ENCODE measurements at regions of chr4 and their contacts with region 1.

Region 1: DNA sequence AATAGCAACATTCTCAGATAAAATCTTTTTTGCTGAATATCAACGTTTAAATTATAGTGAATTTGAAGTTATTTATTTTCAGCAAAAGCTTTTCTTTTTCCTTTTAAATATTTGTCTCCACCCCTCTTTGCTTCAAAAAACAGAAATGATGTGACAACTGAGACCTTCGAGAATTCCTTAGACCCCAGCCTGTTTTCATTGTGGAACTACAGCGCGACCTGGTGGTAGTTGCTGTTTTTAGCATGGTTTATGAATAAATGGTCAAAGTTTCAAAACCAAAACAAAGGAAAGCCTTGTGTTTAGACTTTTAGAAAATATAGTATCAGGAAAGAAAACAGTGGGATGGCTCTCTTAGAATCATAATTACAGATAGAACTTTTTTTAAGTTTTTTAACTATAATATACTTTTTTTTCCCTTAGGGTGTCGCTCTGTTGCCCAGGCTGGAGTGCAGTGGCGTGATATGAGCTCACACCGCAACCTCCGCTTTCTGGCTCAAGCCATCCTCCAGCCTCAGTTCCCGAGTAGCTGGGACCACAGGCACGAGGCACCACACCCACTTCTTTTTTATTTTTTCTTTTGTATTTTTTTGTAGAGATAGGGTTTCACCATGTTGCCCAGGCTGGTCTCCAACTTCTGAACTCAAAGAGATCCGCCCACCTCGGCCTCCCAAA is 26.8 kb upstream of the TMEM184C start:
- DNase-seq: peak in 1 of 2 donors; percentile 60
- ATAC-seq: peak in 1 of 3 donors; percentile 45
- H3K4me3 ChIP-seq: no peak overlapping the region
- H3K4me3 Mint-ChIP-seq: no peak overlapping the region
- H3K27ac ChIP-seq: no peak overlapping the region
- H3K27ac Mint-ChIP-seq: no peak overlapping the region
- H3K4me1 ChIP-seq: no peaks in the 10 kb centered on the region
- H3K4me1 Mint-ChIP-seq: no peaks in the 10 kb centered on the region
- H3K27me3 ChIP-seq: peaks cover 3% of the 10 kb centered on the region
- H3K27me3 Mint-ChIP-seq: peaks cover 11 to 13% of the 10 kb centered on the region in 2 donors
- CTCF ChIP-seq: peak; percentile 62

Region 2: DNA sequence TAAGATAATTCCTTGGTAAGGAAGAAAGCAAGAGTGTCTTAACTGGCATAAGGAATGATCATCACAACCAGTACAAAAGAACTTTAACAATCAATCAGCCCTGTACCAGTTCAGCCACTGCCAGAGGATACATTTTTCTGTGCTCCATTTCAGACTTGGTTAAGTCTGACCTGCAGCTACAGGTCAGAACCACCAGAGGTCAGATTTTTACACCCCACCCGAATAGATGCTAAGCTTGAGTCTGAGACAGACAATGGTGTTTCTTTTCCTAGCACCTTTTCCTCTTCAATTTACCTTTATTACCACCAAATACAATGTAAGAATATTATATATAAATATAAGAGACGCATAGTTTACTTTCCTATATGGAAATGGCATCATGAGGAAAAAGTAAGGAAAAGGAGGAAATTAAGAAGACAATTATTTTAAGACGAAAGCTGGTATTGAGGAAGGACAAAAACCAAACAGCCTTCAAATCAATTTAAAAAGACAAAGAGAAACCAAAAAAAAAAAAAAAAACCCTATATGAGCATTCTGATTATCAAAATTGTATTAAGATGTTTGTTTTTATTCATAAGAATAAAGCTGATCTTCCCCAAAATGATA is 429.4 kb before region 1 on chr4:
- intact Hi-C with region 1: loop called (anchors 5 kb)
- DNase-seq: peak in 1 of 2 donors; percentile 30
- ATAC-seq: peak in 1 of 3 donors; percentile 45
- H3K4me3 ChIP-seq: no peak overlapping the region
- H3K4me3 Mint-ChIP-seq: no peak overlapping the region
- H3K27ac ChIP-seq: no peak overlapping the region
- H3K27ac Mint-ChIP-seq: no peak overlapping the region
- H3K4me1 ChIP-seq: no peaks in the 10 kb centered on the region
- H3K4me1 Mint-ChIP-seq: no peaks in the 10 kb centered on the region
- H3K27me3 ChIP-seq: no peaks in the 10 kb centered on the region
- H3K27me3 Mint-ChIP-seq: peaks cover 8% of the 10 kb centered on the region in 2 donors
- CTCF ChIP-seq: peak; percentile 36

Region 3: DNA sequence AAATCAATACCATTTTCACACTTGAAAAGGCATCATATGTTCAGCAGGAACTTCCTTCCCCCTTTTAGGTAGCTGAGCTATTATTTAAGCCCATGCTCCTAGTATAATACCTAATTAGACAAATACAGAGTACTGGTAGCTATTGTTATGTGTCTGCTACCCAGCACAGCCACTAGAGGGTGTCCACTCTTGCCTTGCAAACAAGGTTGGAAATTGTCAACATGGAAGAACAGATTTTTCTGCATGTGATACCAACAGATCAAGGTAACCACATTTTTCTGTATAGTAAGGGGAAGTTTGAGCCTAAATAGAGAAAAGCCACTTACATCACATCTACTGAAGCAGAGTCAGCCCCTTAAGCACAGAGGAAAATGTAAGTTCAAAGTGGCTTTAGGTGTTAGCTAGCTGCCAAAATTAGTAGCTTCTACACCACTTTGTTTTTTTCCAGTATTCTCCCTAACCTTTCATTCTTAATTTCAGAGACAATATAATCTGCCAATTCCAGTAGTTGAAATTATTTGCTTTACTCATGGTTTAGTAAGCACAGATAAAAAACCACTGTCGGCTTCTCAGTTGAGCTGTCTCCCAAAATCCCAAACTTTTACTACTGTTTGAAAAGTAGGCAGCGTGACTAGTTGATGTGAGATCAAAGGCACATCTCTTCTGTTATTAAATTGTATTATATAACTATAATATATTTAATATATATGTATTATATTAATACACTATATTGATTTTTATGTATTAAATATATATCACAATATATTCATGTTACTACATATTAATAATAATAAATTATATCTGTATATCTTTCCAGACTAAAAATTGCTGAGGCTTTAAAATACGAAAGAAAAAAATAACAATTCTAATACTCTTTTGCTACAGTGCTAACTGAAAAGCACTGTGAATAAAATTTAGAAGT is 71.3 kb before region 1 on chr4:
- intact Hi-C with region 1: loop called (anchors 1 kb)
- DNase-seq: peak in 1 of 2 donors; percentile 66
- ATAC-seq: peak in 2 of 3 donors; percentile 60 to 71
- H3K4me3 ChIP-seq: no peak overlapping the region
- H3K4me3 Mint-ChIP-seq: no peak overlapping the region
- H3K27ac ChIP-seq: no peak overlapping the region
- H3K27ac Mint-ChIP-seq: no peak overlapping the region
- H3K4me1 ChIP-seq: no peaks in the 10 kb centered on the region
- H3K4me1 Mint-ChIP-seq: no peaks in the 10 kb centered on the region
- H3K27me3 ChIP-seq: no peaks in the 10 kb centered on the region
- H3K27me3 Mint-ChIP-seq: peaks cover 7 to 12% of the 10 kb centered on the region in 2 donors
- CTCF ChIP-seq: peak; percentile 73

Measured in natural killer cell (primary cell).